ENCODE measurements at regions of chr4 and their contacts with region 1.

Region 1: GRCh38 chr4:108900018-108900580 is 137.2 kb upstream of the ETNPPL start:
- DNase-seq: no peak
- H3K4me3 Mint-ChIP-seq: no peak overlapping the region
- H3K27ac Mint-ChIP-seq: no peak overlapping the region
- H3K4me1 Mint-ChIP-seq: peaks cover 10% of the 10 kb centered on the region
- H3K27me3 Mint-ChIP-seq: peaks cover 3% of the 10 kb centered on the region

Region 2: GRCh38 chr4:107330915-107331314 is 1569.2 kb before region 1 on chr4:
- intact Hi-C with region 1: no loop called
- DNase-seq: no peak
- H3K4me3 Mint-ChIP-seq: no peak overlapping the region
- H3K27ac Mint-ChIP-seq: no peak overlapping the region
- H3K4me1 Mint-ChIP-seq: no peaks in the 10 kb centered on the region
- H3K27me3 Mint-ChIP-seq: peaks cover 4% of the 10 kb centered on the region

Region 3: DNA sequence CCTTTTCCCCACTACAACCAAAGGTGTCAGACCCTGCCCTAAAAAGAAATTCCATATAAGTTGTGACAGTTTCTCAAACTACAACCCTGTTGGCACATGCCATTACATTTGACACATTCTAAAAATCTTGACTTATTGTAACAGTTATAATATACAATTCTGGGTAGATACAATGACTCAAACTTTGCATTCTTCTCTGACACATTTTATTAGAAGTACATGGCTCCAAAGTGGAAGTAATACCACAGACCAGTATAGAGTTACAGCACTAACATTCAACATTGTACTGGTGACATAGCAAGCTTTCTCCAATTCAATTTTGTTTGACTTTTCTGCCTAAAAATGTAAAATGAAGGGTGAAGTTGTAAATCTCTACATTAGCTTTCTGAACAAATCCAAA is 59.4 kb after region 1 on chr4:
- intact Hi-C with region 1: loop called (anchors 1 kb)
- DNase-seq: no peak
- H3K4me3 Mint-ChIP-seq: no peak overlapping the region
- H3K27ac Mint-ChIP-seq: no peak overlapping the region
- H3K4me1 Mint-ChIP-seq: no peaks in the 10 kb centered on the region
- H3K27me3 Mint-ChIP-seq: peaks cover 7% of the 10 kb centered on the region

Measured in activated T-helper 1 cell treated with anti-CD3 and anti-CD28 coated beads, Interleukin-12 subunit alpha, Interleukin-12 subunit beta, Interleukin-2, Interleukin-4 antibody, amounts not matched to agents 30 ng/mL and 10 ng/mL and 1 ng/mL, durations not matched to agents 14 hours and 24 hours and 36 hours (primary cell).